Heart left ventricle (tissue), 16 donors: ENCODE measurements at regions of chr9 and their contacts with region 1.

Region 1: GRCh38 chr9:13915591-13916326 is 398.2 kb downstream of the NFIB start:
- DNase-seq: no peak
- ATAC-seq: peak; percentile 62 to 79 (median 74)
- H3K4me3 ChIP-seq: no peak overlapping the region
- H3K27ac ChIP-seq: peak overlapping the region; percentile 15 to 79 (median 50)
- H3K4me1 ChIP-seq: peaks cover 0 to 23% (median 3%) of the 10 kb centered on the region in 12 donors
- H3K27me3 ChIP-seq: no peaks in the 10 kb centered on the region
- CTCF ChIP-seq: no peak
- POLR2A ChIP-seq: no peak

Region 2: DNA sequence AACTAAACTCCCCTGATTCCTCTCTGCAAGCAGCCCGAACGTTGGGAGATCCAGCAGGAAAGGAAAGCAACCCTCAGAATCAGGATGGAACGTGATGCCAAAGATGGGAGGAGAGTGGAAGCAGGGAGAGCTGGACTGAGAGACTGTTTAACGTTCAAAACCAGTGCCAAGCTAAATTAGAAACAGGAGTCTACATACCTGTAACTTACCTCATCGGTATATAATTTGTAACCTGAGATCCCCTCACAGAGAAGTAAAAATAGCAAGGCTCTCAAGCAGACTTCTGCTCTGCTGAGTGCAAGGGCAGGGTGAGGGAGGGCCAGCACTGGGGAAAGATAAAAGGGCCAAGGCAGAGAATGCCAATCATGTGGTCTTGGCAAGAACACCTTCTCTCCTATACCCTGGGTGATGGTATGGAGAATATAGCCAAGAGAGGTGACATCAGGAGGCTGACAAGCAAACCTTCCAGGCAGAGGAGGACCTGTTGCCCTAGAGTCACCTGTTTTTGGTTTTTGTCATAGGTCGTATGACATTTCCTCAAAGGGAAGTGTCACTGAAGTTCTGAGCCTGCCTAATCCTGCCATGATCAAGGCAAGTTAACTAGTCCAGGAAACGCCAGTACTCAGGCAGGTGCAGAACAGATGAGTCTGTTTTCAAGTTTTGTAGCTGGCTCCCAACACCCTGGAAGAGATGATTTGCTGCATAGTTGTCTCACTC is 73.9 kb before region 1 on chr9:
- intact Hi-C with region 1: loop called in 1 of 10 experiments (anchors 5 kb)
- DNase-seq: peak; percentile 38 to 65 (median 46)
- ATAC-seq: peak; percentile 86 to 97 (median 95)
- H3K4me3 ChIP-seq: peak overlapping the region in 2 of 12 donors; percentile 0 to 5
- H3K27ac ChIP-seq: peak overlapping the region in 11 of 12 donors; percentile 9 to 81 (median 65)
- H3K4me1 ChIP-seq: peaks cover 0 to 9% (median 0%) of the 10 kb centered on the region in 12 donors
- H3K27me3 ChIP-seq: no peaks in the 10 kb centered on the region
- CTCF ChIP-seq: no peak
- POLR2A ChIP-seq: no peak

Region 3: DNA sequence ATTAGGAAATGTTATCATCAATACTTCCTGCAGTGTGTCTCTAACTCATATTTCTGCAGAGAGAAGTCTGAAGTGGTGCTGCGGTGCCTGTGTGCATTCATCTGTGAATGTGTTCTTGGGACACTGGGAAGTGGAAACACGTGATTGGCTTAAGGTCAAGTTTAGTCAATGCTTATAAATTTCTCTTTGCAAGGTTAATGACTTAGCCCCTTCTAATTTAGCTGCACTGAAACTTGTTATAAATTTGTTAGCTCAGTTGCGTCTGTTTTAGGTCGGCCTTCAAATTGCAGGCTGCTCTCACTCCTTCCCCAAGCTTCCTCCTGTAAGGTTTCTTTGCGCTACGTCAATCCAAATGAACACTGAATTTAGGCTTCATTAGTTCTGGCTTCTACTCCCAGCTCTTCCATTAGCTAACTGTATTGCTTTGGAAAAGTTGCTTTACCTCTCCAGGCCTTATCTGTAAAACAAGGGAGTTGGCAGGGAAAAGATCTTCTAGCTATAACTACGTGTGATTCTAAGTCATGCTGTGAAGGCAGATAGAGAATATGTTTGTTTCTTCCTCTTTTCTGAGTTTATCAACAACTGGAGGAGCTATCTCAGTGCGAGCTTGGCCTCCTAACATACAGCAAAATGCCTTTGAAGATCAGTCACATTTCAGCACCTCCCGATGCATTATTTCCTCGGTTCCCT is 56.4 kb after region 1 on chr9:
- intact Hi-C with region 1: loop called in 2 of 10 experiments (anchors 5 to 10 kb)
- DNase-seq: no peak
- ATAC-seq: peak in 2 of 4 donors; percentile 28 to 50
- H3K4me3 ChIP-seq: no peak overlapping the region
- H3K27ac ChIP-seq: peak overlapping the region in 6 of 12 donors; percentile 7 to 46 (median 34)
- H3K4me1 ChIP-seq: peaks cover 0 to 36% (median 8%) of the 10 kb centered on the region in 12 donors
- H3K27me3 ChIP-seq: no peaks in the 10 kb centered on the region
- CTCF ChIP-seq: no peak
- POLR2A ChIP-seq: no peak